Lower lobe of right lung (tissue), 2 donors: ENCODE measurements at regions of chr4 and their contacts with region 1.

Region 1: GRCh38 chr4:101009471-101009870 is 337.9 kb downstream of the PPP3CA start:
- DNase-seq: no peak
- ATAC-seq: no peak
- H3K4me3 ChIP-seq: no peak overlapping the region
- H3K27ac ChIP-seq: no peak overlapping the region
- H3K4me1 ChIP-seq: no peaks in the 10 kb centered on the region
- H3K27me3 ChIP-seq: no peaks in the 10 kb centered on the region
- CTCF ChIP-seq: no peak

Region 2: GRCh38 chr4:100679926-100680325 is 329.5 kb before region 1 on chr4:
- intact Hi-C with region 1: loop called (anchors 10 kb)
- DNase-seq: no peak
- ATAC-seq: no peak
- H3K4me3 ChIP-seq: no peak overlapping the region
- H3K27ac ChIP-seq: no peak overlapping the region
- H3K4me1 ChIP-seq: no peaks in the 10 kb centered on the region
- H3K27me3 ChIP-seq: no peaks in the 10 kb centered on the region
- CTCF ChIP-seq: no peak

Region 3: DNA sequence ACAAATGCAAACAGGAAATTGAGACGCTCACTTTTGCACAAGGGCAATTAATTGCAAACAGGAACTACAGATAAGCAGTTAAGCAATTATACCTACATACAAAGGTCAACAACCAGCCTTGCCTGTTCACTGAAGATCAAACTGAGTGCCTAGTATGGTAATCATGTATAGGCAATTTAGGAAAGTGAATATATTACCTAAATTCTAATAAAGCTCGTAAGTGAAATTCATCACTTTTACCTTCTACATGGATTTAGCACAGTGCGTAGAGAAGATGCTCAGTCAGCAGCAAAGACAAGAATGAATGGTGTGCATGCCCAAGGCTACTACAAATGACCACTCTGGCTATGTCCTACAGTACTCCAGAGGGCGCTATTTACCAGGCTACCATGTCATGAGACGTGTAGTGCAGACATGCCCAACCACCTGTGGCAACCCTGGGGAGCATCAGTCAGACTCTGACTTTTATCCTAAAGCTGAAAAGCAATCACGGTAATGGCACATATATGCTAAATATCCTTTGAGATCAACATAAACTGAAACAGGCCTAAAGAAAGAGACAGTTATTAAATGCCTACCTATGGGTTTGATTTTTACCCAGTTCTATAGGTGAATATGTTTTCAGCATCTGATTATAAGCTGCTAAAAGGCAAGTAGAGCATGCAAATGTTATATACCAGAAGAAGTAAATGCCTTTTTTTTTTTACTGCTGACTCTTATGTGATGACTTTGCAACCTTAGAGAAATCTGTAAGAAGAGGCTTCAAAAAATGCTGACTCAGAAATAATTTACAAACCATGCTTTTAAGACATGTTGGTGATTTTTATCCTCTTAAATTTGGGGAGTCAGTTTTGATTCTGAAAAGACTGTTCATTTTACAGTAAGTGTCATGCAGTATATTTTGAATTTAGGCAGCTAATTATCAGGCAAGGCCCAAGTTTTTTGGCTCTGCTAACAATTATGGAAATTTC is 159.9 kb after region 1 on chr4:
- intact Hi-C with region 1: no loop called
- DNase-seq: peak; percentile 49
- ATAC-seq: peak; percentile 96 to 98
- H3K4me3 ChIP-seq: no peak overlapping the region
- H3K27ac ChIP-seq: no peak overlapping the region
- H3K4me1 ChIP-seq: peaks cover 10% of the 10 kb centered on the region
- H3K27me3 ChIP-seq: no peaks in the 10 kb centered on the region
- CTCF ChIP-seq: peak; percentile 71

Region 4: DNA sequence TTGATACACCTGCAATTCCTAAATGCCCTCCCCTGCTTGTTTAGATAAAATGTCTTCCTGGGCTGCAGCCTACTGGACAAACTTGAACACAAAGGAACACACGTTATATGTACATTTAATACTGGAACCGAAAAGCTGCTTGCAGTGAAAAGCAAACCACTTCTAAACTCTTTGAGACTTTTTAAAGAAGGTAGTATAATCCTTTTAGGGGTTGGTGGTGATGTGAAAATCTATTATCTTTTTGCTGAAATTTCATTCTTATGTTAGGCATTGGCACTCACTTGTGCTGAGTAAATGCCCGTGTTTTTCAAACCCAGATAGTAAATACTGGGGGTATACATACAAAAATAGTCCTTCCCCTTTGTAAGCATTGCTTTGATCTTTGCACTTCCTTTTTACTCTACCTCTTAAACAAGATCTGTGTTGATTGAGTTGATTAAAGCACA is 1493.9 kb after region 1 on chr4:
- intact Hi-C with region 1: no loop called
- DNase-seq: no peak
- ATAC-seq: no peak
- H3K4me3 ChIP-seq: peak overlapping the region; percentile 92
- H3K27ac ChIP-seq: peak overlapping the region; percentile 98
- H3K4me1 ChIP-seq: peaks cover 43% of the 10 kb centered on the region
- H3K27me3 ChIP-seq: no peaks in the 10 kb centered on the region
- CTCF ChIP-seq: no peak